Stomach (tissue), 19 donors: ENCODE measurements at regions of chr10 and their contacts with region 1.

Region 1: GRCh38 chr10:5873515-5873995 is 16.1 kb downstream of the ANKRD16 start:
- DNase-seq: peak; percentile 63 to 89
- H3K4me3 ChIP-seq: no peak overlapping the region
- H3K27ac ChIP-seq: no peak overlapping the region
- H3K4me1 ChIP-seq: peaks cover 0 to 6% (median 0%) of the 10 kb centered on the region in 4 donors
- H3K27me3 ChIP-seq: no peaks in the 10 kb centered on the region
- CTCF ChIP-seq: peak in 5 of 7 experiments; percentile 64 to 85 (median 71)
- EP300 ChIP-seq: no peak
- POLR2A ChIP-seq: no peak

Region 2: DNA sequence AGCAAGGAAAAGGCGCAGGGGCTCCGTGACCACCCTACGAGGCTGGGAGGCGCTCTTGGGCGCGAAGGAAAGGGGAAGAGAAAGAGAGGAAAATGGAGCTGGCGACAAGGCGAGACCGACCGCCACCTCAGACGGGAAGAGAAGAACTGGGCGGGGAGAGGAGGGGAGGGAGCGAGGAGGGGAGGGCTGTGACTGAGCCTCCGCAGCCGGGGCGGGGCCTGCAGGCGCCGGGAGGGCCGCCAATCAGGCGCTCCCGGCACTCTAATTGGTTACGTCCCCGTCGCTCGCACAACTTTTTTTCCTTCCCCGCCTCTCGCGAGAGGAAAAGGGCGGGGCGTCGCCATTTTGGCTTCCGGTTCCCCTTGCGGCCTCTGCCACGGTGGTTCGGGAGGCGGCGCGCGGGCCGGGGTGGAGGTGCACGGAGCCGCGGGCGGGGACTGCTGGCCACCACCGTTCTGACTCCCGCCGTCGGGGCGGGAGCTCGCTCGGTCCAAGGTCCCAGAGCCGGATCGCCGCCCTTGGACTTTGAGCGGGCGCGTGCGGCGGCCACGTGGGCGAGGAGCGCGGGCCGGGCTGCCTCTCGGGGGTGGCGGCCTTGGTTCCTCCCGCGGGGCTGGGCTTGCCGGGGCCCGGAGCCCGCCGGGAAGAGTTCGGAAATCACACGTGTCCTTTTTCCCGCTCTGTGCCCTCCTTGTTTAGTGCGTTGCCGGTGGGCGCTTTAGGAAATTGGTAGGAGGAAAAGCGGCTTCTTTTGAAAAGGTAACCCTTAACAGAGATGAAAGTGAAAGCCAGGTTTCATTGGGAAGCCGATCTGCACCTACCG is 60.1 kb before region 1 on chr10 and contains the start of gene GDI2:
- intact Hi-C with region 1: loop called (anchors 10 kb)
- DNase-seq: peak; percentile 96 to 99
- H3K4me3 ChIP-seq: peak within 1 kb of the TSS; percentile 83 to 100 (median 94)
- H3K27ac ChIP-seq: peak within 1 kb of the TSS; percentile 95 to 100 (median 98)
- H3K4me1 ChIP-seq: peaks cover 21 to 52% (median 44%) of the 10 kb centered on the region in 4 donors
- H3K27me3 ChIP-seq: no peaks in the 10 kb centered on the region
- CTCF ChIP-seq: no peak
- EP300 ChIP-seq: no peak
- POLR2A ChIP-seq: peak in 2 of 4 donors; percentile 75 to 95
- total RNA-seq, gene GDI2: 63.4 to 600 (median 187) TPM

Region 3: GRCh38 chr10:5971315-5971832 is 97.8 kb after region 1 on chr10:
- intact Hi-C with region 1: no loop called
- DNase-seq: peak; percentile 79 to 83
- H3K4me3 ChIP-seq: no peak overlapping the region
- H3K27ac ChIP-seq: peak overlapping the region; percentile 44 to 85 (median 73)
- H3K4me1 ChIP-seq: peaks cover 25 to 65% (median 27%) of the 10 kb centered on the region in 4 donors
- H3K27me3 ChIP-seq: no peaks in the 10 kb centered on the region
- CTCF ChIP-seq: no peak
- EP300 ChIP-seq: no peak
- POLR2A ChIP-seq: no peak